ENCODE measurements at regions of chr17 and their contacts with region 1.

Region 1: DNA sequence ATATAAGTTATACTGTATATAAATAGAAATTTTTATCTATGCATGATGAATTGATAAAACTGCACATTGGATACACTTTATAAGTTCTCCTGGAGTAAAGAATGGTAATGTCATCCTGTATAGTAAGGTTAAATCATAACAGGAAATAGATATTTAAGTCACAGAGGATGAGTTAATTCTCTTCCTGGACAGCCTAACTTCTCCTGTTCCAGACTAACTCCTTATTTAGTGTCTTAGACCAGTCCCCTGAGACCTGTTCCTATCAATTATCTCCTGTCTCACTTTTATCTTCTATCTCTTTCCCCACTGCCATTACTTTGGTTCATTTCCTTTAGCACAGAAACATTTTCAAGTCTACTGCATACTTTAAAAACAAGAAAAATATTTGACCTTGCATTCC is 46.5 kb downstream of the SSH2 start:
- DNase-seq: no peak
- H3K4me3 Mint-ChIP-seq: no peak overlapping the region
- H3K27ac Mint-ChIP-seq: no peak overlapping the region
- H3K4me1 Mint-ChIP-seq: peaks cover 9% of the 10 kb centered on the region
- H3K27me3 Mint-ChIP-seq: no peaks in the 10 kb centered on the region
- CTCF ChIP-seq: no peak

Region 2: DNA sequence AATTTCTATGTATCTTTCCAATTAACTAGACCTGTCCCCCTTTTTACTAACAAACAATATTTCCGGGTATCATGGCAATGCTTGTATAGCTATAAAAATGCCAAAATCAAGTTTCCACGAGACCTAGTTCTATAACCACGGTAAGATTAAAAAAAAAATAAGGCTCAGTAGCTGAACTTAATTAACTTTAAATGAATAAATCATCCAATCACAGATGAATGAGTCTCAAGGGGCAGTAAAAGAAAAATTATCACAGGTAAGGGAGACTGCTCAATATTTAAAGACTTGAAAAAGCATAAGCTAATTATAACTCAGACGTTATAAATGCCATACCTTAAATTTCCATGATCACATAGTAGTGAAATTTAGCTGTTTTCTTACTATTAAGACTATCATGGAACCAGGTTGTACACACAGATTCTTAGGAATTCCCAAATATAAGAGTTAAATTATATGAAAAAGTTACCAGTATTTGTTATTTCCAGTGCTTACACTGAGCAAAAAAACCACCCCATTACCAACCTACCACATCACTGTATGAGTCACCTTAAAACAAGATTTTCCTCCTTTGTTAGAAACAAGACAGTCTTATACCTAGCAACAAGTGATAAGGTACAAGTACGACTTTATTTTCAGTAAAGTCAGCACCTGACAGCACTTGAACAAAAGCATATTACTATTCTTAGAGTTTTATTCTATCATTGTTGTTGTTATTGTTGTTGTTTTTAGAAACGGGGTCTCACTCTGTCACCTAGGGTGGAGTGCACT is 25.9 kb after region 1 on chr17:
- CTCF ChIA-PET with region 1: no interaction called
- intact Hi-C with region 1: no loop called
- DNase-seq: no peak
- H3K4me3 Mint-ChIP-seq: no peak overlapping the region
- H3K27ac Mint-ChIP-seq: no peak overlapping the region
- H3K4me1 Mint-ChIP-seq: no peaks in the 10 kb centered on the region
- H3K27me3 Mint-ChIP-seq: no peaks in the 10 kb centered on the region
- CTCF ChIP-seq: no peak

Region 3: GRCh38 chr17:29962656-29963055 is 79.2 kb after region 1 on chr17:
- CTCF ChIA-PET with region 1: interaction called, 11 read pairs
- intact Hi-C with region 1: no loop called
- DNase-seq: no peak
- H3K4me3 Mint-ChIP-seq: no peak overlapping the region
- H3K27ac Mint-ChIP-seq: no peak overlapping the region
- H3K4me1 Mint-ChIP-seq: no peaks in the 10 kb centered on the region
- H3K27me3 Mint-ChIP-seq: no peaks in the 10 kb centered on the region
- CTCF ChIP-seq: no peak

Measured in Calu3 (cell line).